ENCODE measurements at regions of chr11 and their contacts with region 1.

Region 1: GRCh38 chr11:77091146-77091940 is 11.3 kb upstream of the OMP start:
- DNase-seq: peak; percentile 77 to 78
- H3K4me3 ChIP-seq: no peak overlapping the region
- H3K27ac ChIP-seq: no peak overlapping the region
- H3K4me1 ChIP-seq: no peaks in the 10 kb centered on the region
- H3K27me3 ChIP-seq: no peaks in the 10 kb centered on the region
- CTCF ChIP-seq: peak; percentile 80 to 93 (median 90)
- POLR2A ChIP-seq: no peak

Region 2: GRCh38 chr11:76501526-76502210 is 589.7 kb before region 1 on chr11:
- intact Hi-C with region 1: no loop called
- DNase-seq: no peak
- H3K4me3 ChIP-seq: no peak overlapping the region
- H3K27ac ChIP-seq: no peak overlapping the region
- H3K4me1 ChIP-seq: no peaks in the 10 kb centered on the region
- H3K27me3 ChIP-seq: no peaks in the 10 kb centered on the region
- CTCF ChIP-seq: no peak
- POLR2A ChIP-seq: no peak

Region 3: DNA sequence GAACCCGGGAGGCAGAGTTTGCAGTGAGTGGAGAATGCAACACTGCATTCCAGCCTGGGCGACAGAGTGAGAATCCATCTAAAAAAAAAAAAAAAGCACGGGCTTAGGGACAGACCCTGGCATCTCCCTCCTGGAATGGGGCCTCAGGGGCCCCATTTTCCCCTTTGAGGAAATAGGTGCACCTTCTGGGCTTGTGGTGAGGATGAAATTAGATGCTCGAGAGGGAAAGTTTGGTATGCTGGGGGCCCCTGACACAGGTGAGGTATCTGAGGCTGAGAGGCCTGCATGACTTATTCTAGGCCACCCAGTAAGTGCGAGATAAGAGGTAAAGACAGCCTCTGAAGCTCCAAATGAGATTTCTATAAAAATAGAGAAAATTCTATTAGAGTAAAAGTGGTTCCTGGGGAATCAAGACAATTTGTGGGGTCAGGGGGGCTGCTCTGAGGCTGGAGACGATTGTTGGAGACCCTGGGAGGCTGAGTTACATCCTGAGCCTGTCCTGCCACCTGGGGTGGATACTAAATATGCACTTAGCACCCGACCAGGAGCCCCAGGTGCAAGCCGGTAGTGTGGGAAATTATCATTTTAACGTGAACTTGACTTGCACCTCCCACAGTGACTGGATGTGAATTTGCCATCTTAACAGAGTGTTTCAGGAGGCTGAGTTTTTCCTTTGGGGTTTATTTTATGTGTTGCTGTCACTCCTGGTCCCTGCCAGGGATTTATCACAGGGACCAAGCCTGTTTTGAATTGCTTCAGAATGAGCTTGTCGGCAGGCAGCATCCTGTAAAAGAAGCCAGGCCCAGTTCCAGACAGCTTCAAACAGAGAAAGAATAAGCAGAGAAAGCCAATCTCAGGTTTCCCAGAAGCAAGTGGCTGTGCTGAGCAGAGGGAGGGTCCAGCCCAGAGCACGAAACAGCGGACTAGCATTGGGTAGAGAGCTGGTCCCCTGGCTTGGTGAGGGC is 356.6 kb before region 1 on chr11:
- intact Hi-C with region 1: loop called (anchors 5 kb)
- DNase-seq: no peak
- H3K4me3 ChIP-seq: no peak overlapping the region
- H3K27ac ChIP-seq: no peak overlapping the region
- H3K4me1 ChIP-seq: peaks cover 0 to 6% of the 10 kb centered on the region in 2 donors
- H3K27me3 ChIP-seq: no peaks in the 10 kb centered on the region
- CTCF ChIP-seq: no peak
- POLR2A ChIP-seq: no peak

Region 4: DNA sequence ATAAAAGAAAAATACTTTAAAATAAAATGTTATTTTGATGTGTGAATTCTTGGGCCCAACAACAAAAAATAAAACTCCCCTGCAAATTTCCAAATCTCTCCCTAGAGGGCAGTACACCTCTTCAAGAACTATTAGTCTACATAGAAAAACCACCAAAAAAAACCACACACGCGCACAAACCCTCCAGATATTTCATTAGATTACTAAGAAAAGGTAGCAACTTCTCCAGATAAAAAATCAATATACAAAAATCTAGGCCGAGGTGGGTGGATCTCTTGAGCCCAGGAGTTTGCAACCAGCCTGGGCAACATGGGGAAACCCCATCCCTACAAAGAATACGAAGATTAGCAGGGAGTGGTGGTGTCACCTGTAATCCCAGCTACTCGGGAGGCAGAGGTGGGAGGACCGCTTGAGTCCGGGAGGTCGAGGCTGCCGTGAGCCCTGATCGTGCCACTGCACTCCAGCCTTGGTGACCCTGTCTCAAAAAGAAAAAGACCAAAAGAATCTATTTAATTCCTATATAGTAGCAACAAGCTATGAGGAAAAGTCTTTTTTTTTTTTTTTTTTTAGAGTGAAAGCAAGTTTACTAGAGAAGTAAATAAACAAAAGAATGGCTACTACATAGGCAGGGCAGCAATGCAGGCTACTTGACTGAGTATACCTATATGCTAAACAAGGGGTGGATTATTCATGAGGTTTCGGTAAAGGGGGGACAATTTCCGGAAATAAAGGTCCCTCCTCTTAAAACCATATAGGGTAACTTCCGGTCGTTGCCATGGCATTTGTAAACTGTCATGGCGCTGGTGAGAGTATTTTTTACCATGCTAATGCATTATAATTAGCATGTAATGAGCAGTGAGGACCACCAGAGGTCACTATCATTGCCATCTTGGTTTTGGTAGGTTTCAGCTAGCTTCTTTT is 44.1 kb before region 1 on chr11:
- intact Hi-C with region 1: loop called (anchors 2 kb)
- DNase-seq: peak; percentile 77 to 81
- H3K4me3 ChIP-seq: peak overlapping the region in 1 of 3 donors; percentile 26
- H3K27ac ChIP-seq: peak overlapping the region in 1 of 3 donors; percentile 4
- H3K4me1 ChIP-seq: peaks cover 0 to 12% of the 10 kb centered on the region in 2 donors
- H3K27me3 ChIP-seq: no peaks in the 10 kb centered on the region
- CTCF ChIP-seq: peak; percentile 35 to 85 (median 66)
- POLR2A ChIP-seq: no peak